ENCODE measurements at regions of chr6 and their contacts with region 1.

Region 1: DNA sequence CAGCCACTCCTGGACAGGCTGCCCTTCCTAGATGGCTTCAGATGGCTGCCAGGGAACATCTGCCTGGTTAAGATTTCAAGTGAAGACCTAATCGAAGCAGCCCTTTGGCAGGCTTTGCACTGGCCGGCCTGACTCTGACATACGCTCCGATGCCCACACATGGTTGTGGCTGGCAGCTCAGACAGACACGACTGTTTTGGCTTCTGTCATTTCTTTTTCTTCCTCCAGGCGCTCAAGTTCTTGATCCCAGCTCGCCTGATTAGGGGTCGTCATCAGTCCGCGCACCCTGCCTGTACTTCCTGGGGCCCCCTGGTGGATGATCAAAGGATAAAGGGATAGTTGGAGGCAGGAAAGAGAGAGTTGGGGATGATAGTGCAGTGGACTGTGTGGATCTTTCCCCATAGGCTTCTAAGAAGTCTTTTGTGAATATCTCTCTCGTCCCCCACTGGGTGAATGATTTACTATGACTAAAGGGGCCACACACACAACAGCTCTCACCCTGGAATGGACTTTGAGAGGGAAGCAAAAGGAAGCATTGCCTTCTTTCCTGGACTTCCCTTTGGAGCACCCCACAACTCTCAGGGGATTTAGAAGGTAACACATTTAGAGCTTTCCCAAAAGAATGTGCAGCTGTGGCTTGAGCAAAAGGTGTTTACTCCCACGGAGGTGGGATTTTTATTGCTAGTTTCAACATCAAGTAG is 21.4 kb upstream of the TRAM2 start:
- DNase-seq: no peak
- H3K4me3 ChIP-seq: no peak overlapping the region
- H3K27ac ChIP-seq: no peak overlapping the region
- H3K4me1 ChIP-seq: peaks cover 12% of the 10 kb centered on the region
- H3K27me3 ChIP-seq: no peaks in the 10 kb centered on the region
- CTCF ChIP-seq: peak; percentile 60 to 71

Region 2: GRCh38 chr6:52577022-52577777 is 21.1 kb before region 1 on chr6 and contains the start of gene TRAM2:
- CTCF ChIA-PET with region 1: no interaction called
- dilution Hi-C with region 1: no loop called
- in situ Hi-C with region 1: no loop called
- intact Hi-C with region 1: loop called (anchors 2 kb)
- DNase-seq: peak; percentile 71
- H3K4me3 ChIP-seq: peak within 1 kb of the TSS; percentile 67 to 85 (median 83)
- H3K27ac ChIP-seq: peak within 1 kb of the TSS; percentile 70
- H3K4me1 ChIP-seq: peaks cover 22% of the 10 kb centered on the region
- H3K27me3 ChIP-seq: no peaks in the 10 kb centered on the region
- CTCF ChIP-seq: no peak
- total RNA-seq, gene TRAM2: 12.5 to 16.9 TPM

Region 3: DNA sequence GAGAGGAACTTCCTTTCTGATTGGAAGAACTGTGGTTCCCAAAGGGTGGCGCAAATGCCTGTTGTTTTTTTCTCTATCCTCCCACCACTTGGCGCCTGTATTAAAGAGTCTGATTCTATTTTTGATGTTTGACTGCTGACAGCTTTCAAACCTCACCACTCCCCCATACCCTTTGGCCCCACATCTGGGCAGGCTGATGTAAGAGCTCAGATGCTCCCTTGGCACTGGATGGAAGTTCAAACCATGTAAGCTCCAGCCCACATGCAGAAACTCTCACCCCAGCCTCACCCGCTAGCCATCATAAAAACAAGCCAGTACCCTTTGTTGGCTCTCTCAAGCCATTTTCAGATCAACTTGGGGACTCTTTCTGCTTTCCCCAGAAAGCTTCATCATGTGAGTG is 52.7 kb after region 1 on chr6:
- CTCF ChIA-PET with region 1: interaction called, 10 read pairs
- dilution Hi-C with region 1: no loop called
- in situ Hi-C with region 1: no loop called
- intact Hi-C with region 1: loop called (anchors 2 kb)
- DNase-seq: no peak
- H3K4me3 ChIP-seq: no peak overlapping the region
- H3K27ac ChIP-seq: no peak overlapping the region
- H3K4me1 ChIP-seq: no peaks in the 10 kb centered on the region
- H3K27me3 ChIP-seq: no peaks in the 10 kb centered on the region
- CTCF ChIP-seq: no peak

Measured in mammary epithelial cell (primary cell).